ENCODE measurements at regions of chr15 and their contacts with region 1.

Region 1: GRCh38 chr15:66851226-66852071 is 149.4 kb downstream of the SMAD6 start:
- DNase-seq: peak; percentile 94
- H3K4me3 ChIP-seq: no peak overlapping the region
- H3K27ac ChIP-seq: peak overlapping the region; percentile 49 to 58 (median 56)
- H3K4me1 ChIP-seq: peaks cover 0 to 24% (median 21%) of the 10 kb centered on the region in 4 donors
- H3K27me3 ChIP-seq: no peaks in the 10 kb centered on the region
- CTCF ChIP-seq: peak; percentile 91 to 96 (median 96)
- EP300 ChIP-seq: no peak
- POLR2A ChIP-seq: no peak

Region 2: GRCh38 chr15:66504563-66505429 is 346.7 kb before region 1 on chr15 and contains the starts of genes RPL4 and ZWILCH:
- intact Hi-C with region 1: loop called (anchors 5 kb)
- DNase-seq: peak; percentile 90
- H3K4me3 ChIP-seq: peak within 1 kb of the TSS; percentile 65 to 87 (median 78)
- H3K27ac ChIP-seq: peak within 1 kb of the TSS; percentile 88 to 90 (median 89)
- H3K4me1 ChIP-seq: peaks cover 0 to 30% (median 22%) of the 10 kb centered on the region in 4 donors
- H3K27me3 ChIP-seq: no peaks in the 10 kb centered on the region
- CTCF ChIP-seq: no peak
- EP300 ChIP-seq: no peak
- POLR2A ChIP-seq: peak; percentile 98 to 99
- total RNA-seq, gene RPL4: 2,778 to 9,223 (median 4,574) TPM
- total RNA-seq, gene ZWILCH: 3.1 to 8.2 (median 3.6) TPM

Region 3: GRCh38 chr15:66603301-66604179 is 247.9 kb before region 1 on chr15:
- intact Hi-C with region 1: loop called (anchors 1 kb)
- DNase-seq: peak; percentile 73
- H3K4me3 ChIP-seq: no peak overlapping the region
- H3K27ac ChIP-seq: no peak overlapping the region
- H3K4me1 ChIP-seq: no peaks in the 10 kb centered on the region
- H3K27me3 ChIP-seq: no peaks in the 10 kb centered on the region
- CTCF ChIP-seq: peak; percentile 59 to 80 (median 64)
- EP300 ChIP-seq: no peak
- POLR2A ChIP-seq: no peak

Region 4: GRCh38 chr15:66619151-66619903 is 232.1 kb before region 1 on chr15:
- intact Hi-C with region 1: loop called (anchors 2 kb)
- DNase-seq: peak; percentile 86
- H3K4me3 ChIP-seq: no peak overlapping the region
- H3K27ac ChIP-seq: peak overlapping the region in 1 of 4 donors; percentile 32
- H3K4me1 ChIP-seq: peaks cover 0 to 41% (median 37%) of the 10 kb centered on the region in 4 donors
- H3K27me3 ChIP-seq: peaks cover 0 to 21% (median 17%) of the 10 kb centered on the region in 3 donors
- CTCF ChIP-seq: peak; percentile 60 to 88 (median 74)
- EP300 ChIP-seq: no peak
- POLR2A ChIP-seq: no peak

Region 5: DNA sequence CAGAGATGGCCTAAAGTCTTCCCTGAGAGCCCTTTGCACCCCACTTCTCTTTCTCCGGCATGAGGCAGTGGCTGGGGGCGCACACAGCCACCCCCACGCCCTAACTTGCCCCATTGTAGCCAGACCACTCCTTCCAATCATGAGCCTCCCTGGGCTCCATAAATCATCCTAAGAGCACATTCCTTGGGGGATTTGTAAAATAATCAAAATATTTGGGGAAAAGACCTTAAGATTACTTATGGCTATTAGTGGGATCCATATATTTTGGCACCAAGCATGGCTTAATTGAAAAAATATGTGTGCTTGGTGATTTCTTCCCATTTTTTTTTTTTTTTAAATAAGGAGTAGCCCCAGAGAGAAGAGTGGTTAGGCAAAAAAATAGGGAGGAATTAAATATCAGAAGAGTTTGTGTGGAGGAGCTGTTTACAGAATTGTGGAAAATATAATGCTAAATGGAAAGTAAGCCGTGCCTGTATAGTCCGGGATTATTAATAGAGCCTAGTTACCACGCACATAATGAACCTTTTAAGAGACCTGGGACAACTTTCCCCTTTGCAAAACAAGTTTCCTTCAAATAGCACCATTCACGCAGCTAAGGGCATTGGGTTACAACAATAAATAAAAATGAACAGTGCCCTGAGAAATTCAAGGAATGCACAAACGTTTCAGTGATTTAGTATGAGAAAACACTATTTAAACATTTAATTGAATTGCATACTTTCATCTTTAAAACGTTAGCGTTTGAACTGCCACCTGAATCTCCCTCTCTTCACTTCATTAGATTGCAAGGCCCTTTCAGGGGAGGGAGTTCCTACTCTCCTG is 103.4 kb before region 1 on chr15:
- intact Hi-C with region 1: no loop called
- DNase-seq: no peak
- H3K4me3 ChIP-seq: no peak overlapping the region
- H3K27ac ChIP-seq: peak overlapping the region in 2 of 4 donors; percentile 23 to 55
- H3K4me1 ChIP-seq: peaks cover 0 to 23% (median 21%) of the 10 kb centered on the region in 4 donors
- H3K27me3 ChIP-seq: no peaks in the 10 kb centered on the region
- CTCF ChIP-seq: no peak
- EP300 ChIP-seq: no peak
- POLR2A ChIP-seq: no peak

Region 6: DNA sequence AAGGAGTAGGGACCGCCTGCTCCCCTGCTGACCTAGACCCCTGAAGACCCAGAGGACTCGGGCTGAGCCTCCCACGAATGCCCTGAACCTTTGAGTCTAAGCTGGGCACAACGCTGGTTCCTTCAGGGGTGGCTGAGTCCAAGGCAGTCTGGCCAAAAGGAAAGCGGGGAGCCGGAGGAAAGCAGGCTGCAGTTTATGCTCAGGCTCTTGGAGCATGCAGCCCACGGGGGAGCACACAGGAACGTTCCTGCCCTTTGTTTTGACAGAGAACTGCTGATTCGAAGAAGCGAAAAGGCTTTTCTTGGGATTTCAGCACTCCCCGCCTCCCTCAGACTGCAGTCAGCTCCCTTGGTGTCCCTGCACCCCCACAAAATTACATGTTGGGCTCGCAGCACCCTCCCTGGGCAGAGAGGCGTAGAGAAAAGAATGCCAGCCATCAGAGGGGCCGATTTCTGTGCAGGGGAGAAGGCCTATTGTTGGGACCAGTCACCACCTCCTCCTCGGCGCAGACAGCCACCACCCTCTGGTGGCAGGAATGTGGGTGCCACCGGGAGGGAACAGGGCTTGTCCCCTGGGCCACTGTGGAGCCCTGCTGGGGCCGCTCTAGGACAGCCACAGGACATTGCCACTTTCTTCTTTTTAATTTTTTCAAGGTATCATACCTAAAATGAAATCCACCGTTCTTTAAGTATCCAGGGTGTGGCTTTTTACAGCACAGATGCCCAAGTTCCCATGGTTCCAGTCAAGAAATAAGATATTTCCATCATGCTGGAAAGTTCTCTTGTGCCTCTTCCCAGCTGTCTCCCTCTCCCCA is 77.2 kb before region 1 on chr15:
- intact Hi-C with region 1: loop called (anchors 2 kb)
- DNase-seq: peak; percentile 92
- H3K4me3 ChIP-seq: no peak overlapping the region
- H3K27ac ChIP-seq: peak overlapping the region; percentile 68 to 79 (median 72)
- H3K4me1 ChIP-seq: peaks cover 0 to 38% (median 34%) of the 10 kb centered on the region in 4 donors
- H3K27me3 ChIP-seq: no peaks in the 10 kb centered on the region
- CTCF ChIP-seq: peak; percentile 94 to 98 (median 97)
- EP300 ChIP-seq: no peak
- POLR2A ChIP-seq: no peak